Mammary epithelial cell (primary cell): ENCODE measurements at regions of chr3 and their contacts with region 1.

Region 1: GRCh38 chr3:129195731-129196256 is 12.1 kb upstream of the CNBP start:
- DNase-seq: peak; percentile 89
- H3K4me3 ChIP-seq: peak overlapping the region in 2 of 3 experiments; percentile 5 to 16
- H3K27ac ChIP-seq: peak overlapping the region; percentile 33
- H3K4me1 ChIP-seq: peaks cover 28% of the 10 kb centered on the region
- H3K27me3 ChIP-seq: no peaks in the 10 kb centered on the region
- CTCF ChIP-seq: no peak

Region 2: DNA sequence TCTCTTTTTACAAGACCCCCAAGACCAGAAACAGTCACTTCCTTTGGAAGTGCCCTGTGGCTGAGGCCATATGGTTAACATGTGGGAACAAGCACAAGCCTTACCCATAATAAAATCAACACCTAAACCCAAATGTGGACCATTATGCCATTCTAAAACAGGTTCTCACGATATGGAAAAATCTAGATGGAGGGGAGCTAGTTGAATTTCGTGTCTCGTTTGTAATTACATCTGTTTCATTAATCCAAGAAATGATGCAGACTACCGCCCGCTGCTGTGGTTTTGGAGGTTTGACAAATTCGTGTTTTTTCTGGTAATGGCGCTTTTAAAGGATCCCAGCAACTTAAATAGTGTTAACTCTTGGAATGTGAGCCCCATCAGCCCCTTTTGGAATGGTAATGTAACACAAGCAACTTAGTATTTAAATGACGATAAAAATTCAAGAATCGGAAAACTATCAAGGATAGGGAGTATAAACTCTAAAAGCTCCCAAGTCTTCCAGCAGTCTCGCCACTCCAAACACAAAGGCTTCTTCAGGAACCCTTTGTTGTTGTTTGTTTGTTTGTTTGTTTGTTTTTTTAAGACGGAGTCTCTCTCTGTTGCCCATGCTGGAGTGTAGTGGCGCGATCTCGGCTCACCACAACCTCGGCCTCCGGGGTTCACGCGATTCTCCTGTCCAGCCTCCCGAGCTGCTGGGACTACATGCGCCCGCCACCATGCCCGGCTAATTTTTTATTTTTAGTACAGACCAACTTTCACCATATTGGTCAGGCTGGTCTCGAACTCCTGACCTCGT is 13.2 kb before region 1 on chr3:
- CTCF ChIA-PET with region 1: no interaction called
- dilution Hi-C with region 1: no loop called
- in situ Hi-C with region 1: no loop called
- intact Hi-C with region 1: no loop called
- DNase-seq: peak; percentile 45
- H3K4me3 ChIP-seq: peak overlapping the region; percentile 73 to 95 (median 94)
- H3K27ac ChIP-seq: peak overlapping the region; percentile 85
- H3K4me1 ChIP-seq: peaks cover 26% of the 10 kb centered on the region
- H3K27me3 ChIP-seq: no peaks in the 10 kb centered on the region
- CTCF ChIP-seq: no peak

Region 3: DNA sequence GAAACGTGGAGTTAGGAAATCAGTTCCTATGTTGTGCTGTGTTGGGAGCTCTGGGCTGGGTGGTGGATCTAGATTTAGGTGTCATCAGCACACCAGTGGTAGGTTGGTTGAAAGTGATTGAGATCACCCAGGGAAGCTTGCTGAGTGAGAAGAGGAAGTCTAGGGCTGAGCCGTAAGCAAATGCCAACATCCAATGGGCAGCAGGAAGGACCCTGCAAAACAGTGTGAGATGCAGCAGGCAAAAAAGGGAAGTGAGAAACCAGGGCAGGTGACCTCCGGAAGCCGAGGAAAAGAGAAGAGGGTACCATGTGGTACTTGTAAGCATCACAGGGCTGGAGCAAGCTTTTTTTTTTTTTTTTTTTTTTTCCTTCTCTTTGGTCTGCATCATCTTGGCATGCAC is 37.7 kb after region 1 on chr3:
- CTCF ChIA-PET with region 1: no interaction called
- dilution Hi-C with region 1: loop called (anchors 5 kb)
- in situ Hi-C with region 1: no loop called
- intact Hi-C with region 1: no loop called
- DNase-seq: no peak
- H3K4me3 ChIP-seq: no peak overlapping the region
- H3K27ac ChIP-seq: no peak overlapping the region
- H3K4me1 ChIP-seq: peaks cover 25% of the 10 kb centered on the region
- H3K27me3 ChIP-seq: no peaks in the 10 kb centered on the region
- CTCF ChIP-seq: no peak